Activated naive CD8-positive, alpha-beta T cell treated with anti-CD3 and anti-CD28 coated beads, Interleukin-2, amount 10 ng/mL, durations not matched to agents 7 days and 5 days (primary cell): ENCODE measurements at regions of chr10 and their contacts with region 1.

Region 1: DNA sequence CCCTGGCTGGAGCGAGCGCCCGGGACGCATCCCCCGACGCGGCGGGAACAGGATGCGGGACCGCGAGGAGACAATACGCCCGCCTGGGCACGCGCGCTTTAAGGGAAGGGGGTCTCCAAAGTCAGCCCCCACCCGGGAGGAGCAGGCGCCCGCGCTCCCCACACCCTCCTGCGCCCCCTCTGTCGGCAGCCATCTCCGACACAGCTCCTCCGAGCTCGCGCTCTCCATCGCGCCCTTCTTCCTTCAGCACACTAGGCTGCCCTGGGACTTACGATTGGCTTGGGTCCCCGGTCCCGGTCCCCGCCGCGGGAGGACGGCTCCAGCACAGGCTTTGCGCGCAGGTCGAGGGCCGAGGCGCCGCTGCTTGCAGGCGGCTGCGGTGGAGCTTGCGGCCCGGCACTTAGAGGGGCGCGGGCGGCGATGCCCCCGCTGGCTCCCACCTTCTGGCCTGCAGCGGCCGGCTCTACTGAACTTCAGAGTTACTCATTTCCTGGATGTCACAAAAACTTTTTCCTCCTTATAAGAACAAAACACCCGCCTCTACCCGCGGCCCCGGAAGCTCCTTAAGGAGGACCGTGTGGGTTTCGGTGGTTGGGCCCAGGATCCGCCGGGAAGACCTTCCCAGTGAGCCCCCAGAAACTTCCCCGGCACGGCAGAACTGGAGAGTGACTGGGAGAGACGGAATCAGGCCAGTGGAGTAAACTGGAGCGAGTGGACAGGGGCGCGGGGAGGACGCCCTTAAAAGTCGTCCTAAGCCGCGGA is at the start of gene ITPRIP:
- DNase-seq: peak; percentile 79
- ATAC-seq: peak; percentile 71
- H3K4me3 Mint-ChIP-seq: peak within 1 kb of the TSS; percentile 98
- H3K27ac Mint-ChIP-seq: peak within 1 kb of the TSS; percentile 100
- H3K4me1 Mint-ChIP-seq: peaks cover 39% of the 10 kb centered on the region
- H3K27me3 Mint-ChIP-seq: peaks cover 6% of the 10 kb centered on the region
- total RNA-seq, gene ITPRIP: 24.7 to 25.4 TPM

Region 2: DNA sequence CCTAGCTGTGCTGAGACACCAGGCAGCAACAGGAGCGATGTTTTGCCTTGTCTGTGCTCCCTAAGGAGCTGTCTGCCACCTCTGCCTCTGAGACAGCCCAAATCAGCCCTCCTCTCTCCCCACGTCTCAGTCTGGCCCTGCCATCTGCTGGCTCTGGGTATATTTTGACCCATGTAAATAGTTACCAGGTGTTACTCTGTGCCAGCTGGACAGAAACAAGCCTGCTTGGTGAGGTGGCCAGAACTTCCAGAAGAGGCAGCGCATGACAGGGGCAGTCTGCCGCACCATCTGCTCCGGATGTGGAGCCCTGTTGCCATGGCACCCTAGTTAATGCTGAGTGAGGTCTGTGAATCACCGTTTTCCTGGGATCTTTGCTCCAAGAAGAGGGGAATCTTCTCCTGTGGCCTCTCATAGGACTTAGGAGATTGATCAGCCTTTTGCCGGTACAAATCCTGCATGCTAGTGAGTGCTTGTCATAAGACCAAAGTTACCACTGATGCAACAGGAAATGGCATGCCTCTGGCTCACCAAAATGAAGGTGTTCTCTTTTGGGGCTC is 37.3 kb before region 1 on chr10:
- POLR2A ChIA-PET with region 1: interaction called, 40 read pairs
- DNase-seq: no peak
- ATAC-seq: peak; percentile 69
- H3K4me3 Mint-ChIP-seq: peak overlapping the region; percentile 51
- H3K27ac Mint-ChIP-seq: peak overlapping the region; percentile 84
- H3K4me1 Mint-ChIP-seq: peaks cover 39% of the 10 kb centered on the region
- H3K27me3 Mint-ChIP-seq: peaks cover 4% of the 10 kb centered on the region

Region 3: DNA sequence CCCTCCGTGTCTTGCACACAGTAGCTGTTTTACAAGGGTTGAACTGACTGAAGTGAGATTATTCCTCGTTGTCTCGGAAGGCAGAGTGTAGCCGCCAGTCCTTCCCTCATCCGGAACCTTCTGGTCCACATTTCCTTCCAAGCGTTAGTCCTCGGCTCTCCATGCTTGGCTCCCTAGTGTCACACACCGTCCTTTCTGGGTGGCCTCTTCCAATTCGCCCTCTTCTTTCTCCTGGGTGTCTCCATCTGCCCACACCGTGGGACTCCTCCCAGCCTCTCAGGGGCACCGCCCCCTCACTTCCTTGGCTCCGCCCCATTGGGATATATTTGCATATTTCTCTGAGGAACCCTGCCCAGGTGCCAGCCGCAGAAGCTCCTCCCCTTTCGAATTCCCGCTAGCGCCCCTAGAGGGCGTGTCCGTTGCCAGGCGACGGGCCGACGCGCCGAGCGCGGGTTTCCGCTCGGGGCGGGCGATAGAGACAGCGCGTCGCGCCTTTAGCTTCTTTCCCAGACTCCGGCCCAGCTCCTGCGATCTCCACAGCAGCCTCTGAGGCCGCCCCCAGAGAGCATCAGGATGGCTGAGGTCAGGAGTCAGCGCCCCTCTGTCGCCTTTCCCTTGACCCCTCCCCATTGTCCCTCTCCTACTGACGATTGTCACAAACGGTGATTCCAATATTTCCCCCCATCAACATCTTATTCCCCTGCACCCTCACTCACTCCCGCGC is 15.3 kb after region 1 on chr10 and contains the start of gene CFAP58:
- POLR2A ChIA-PET with region 1: interaction called, 33 read pairs
- DNase-seq: peak; percentile 94
- ATAC-seq: peak; percentile 91
- H3K4me3 Mint-ChIP-seq: no peak within 1 kb of the TSS
- H3K27ac Mint-ChIP-seq: peak within 1 kb of the TSS; percentile 27
- H3K4me1 Mint-ChIP-seq: peaks cover 18% of the 10 kb centered on the region
- H3K27me3 Mint-ChIP-seq: no peaks in the 10 kb centered on the region
- total RNA-seq, gene CFAP58: 0.28 to 0.34 TPM